Naive thymus-derived CD8-positive, alpha-beta T cell (primary cell): ENCODE measurements at regions of chr6 and their contacts with region 1.

Region 1: DNA sequence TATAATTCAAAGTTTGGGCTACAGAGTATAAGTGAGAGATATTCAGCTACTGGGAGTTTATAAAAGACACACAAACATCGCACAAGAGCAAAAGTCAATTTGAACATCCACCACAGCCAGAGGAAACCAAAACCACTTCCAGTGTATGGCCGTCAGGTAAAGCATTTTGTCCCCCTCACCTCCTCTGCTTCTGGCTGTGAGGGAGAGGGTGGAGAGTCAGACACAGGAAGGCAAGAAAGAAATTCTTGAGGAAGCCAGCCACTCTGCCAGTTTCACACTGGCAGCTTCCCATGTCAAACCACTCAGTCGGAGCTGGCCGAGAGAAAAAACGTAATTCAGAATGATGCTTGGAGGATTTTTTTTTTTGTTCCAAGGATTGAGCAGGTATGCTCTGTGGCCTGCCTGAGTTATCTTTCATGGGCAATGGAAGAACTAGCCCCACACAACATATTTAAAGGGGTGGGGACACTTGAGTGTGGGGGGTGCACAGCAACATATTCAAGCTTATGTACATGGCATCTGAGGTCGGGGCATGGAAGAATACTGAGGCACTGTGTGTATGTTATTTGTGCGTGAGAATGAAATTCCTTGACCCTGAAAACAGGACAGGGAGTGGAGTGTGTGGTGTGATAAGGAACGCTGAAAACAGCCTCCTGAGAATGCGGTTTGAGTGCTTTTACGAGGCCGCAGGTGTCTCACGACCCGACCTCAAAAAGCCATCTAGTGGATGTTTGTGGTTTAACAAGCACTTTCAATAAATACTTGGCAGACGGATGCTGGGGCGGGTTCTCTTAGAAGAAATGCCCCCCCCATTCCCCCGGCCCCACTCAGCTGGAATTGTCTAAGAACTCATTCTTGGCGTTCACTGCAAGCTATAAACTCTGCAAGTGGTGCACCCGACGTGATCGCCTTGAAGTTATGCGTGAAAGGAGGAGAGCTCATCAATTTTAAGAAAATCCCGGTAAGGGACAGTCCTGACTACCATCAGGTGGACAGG is 27.5 kb upstream of the ZBTB22 start:
- DNase-seq: peak; percentile 46 to 88 (median 74)
- ATAC-seq: peak; percentile 56 to 64
- H3K4me3 Mint-ChIP-seq: peak overlapping the region; percentile 73 to 91 (median 84)
- H3K27ac Mint-ChIP-seq: peak overlapping the region; percentile 91 to 99 (median 96)
- H3K4me1 Mint-ChIP-seq: peaks cover 28 to 54% (median 48%) of the 10 kb centered on the region in 4 donors
- H3K27me3 Mint-ChIP-seq: no peaks in the 10 kb centered on the region

Region 2: DNA sequence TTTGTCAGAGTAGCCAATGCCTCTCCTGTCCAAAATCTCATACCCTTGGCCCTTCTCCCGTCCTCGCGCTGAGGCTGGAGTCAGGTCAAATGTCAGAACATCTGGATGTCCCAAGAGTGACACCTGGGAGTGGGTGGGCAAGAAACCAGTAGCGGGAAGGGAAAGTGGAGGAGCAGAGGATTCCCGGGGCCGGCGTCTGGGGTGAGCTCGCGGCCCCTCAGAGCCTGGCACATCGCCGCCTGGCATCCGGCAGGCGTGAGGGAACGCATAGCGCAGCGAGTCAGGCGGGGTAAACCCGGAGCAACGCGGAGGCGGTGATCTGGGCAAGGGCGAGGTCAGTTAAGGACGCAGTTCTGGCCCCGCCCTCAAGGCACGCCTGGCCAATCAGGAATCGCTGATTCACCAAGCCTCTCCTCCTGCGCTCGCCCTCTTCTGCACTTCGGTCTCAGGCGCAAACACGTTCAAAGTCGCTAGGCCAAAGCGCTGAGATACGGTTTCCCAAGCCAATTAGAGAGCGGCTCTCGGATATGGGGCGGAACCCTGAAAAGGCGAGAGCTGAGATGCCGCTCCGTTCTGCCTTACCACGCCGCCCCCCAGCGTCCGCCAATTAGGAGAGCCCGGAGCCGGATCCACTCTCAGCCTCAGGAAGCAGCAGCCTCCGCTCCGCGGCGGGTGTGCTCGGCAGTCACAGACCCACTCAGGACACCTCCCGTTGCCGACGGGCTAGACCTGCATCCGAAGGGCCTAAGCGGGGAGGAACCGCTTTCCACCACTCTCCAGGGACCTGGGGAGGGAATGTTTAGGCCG is 95.9 kb before region 1 on chr6:
- POLR2A ChIA-PET with region 1: interaction called, 28 read pairs
- DNase-seq: peak; percentile 87 to 98 (median 95)
- ATAC-seq: peak; percentile 86 to 89
- H3K4me3 Mint-ChIP-seq: peak overlapping the region; percentile 83 to 94 (median 90)
- H3K27ac Mint-ChIP-seq: peak overlapping the region; percentile 91 to 99 (median 98)
- H3K4me1 Mint-ChIP-seq: peaks cover 22 to 41% (median 38%) of the 10 kb centered on the region in 4 donors
- H3K27me3 Mint-ChIP-seq: no peaks in the 10 kb centered on the region

Region 3: DNA sequence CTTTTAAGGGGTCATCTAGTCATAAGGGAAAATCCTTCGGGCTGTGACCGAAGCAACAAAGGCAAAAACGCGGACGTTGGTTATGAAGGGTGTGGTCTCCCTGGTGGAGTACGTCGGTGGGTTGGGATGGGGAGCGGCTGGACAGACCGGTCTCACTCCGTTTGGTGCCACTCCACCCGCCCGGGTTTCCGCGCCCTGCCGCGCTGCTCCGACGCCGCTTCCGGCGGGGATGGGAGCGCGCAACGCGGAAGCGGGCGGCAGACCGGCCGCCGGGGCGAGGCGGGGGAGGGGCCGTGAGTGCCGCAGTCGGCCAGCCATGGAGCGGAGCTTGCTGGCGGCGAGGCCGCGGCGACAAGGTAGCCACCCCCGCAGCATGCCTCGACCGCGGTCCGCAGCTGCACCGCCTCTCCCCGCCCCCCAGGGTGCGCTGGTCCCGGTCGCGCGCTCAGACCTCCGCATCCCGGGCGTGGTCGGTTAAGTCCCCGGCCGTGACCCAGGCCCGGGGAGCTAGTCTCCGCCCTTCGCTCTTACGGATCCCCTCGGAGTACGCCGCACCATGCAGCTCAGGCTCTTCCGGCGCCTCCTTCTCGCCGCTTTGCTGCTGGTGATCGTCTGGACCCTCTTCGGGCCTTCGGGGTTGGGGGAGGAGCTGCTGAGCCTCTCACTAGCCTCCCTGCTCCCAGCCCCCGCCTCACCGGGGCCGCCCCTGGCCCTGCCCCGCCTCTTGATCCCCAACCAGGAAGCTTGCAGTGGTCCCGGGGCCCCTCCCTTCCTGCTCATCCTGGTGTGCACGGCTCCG is 67.9 kb before region 1 on chr6 and contains the start of gene B3GALT4:
- POLR2A ChIA-PET with region 1: interaction called, 71 read pairs
- DNase-seq: peak; percentile 37 to 78 (median 64)
- ATAC-seq: peak; percentile 72 to 76
- H3K4me3 Mint-ChIP-seq: peak within 1 kb of the TSS; percentile 88 to 96 (median 92)
- H3K27ac Mint-ChIP-seq: peak within 1 kb of the TSS; percentile 72 to 97 (median 94)
- H3K4me1 Mint-ChIP-seq: peaks cover 34 to 80% (median 77%) of the 10 kb centered on the region in 4 donors
- H3K27me3 Mint-ChIP-seq: no peaks in the 10 kb centered on the region
- polyA plus RNA-seq, gene B3GALT4: 14.5 to 20.4 (median 18.7) TPM

Region 4: DNA sequence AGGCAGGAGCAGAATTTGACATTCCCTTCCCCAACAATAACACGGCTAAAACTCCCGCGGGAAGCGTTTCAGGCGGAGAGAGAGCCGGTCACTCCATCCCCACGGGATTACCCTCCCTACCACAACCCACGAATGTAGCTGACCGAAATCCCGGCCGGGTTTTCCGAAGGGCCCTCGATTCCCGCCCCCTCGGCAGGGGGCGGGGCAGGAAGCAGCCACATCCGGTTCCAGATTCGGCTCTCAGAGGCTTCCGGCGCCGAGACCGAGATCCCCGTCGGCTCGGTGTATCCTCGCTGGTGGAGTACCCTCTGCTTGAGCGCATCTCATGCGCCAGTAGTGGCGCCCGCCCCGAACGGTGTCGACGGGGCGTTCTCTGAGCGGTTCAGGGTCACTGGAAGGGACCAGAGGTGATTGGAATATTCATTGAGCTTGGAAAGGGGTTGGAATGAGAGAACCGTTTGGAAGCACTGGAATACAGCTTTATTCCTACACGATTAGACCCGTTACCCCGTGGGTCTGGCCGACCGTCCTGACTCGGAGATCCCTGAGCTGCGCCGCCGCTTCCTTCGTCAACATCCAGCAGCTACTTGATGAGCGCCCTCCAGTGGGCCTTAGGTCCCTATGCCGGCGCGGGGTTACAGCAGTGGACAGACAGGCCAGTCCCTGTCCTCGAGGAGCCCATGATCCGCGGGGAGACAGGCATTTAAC is 45.6 kb before region 1 on chr6:
- POLR2A ChIA-PET with region 1: interaction called, 101 read pairs
- DNase-seq: peak; percentile 86 to 95 (median 92)
- ATAC-seq: peak; percentile 82 to 88
- H3K4me3 Mint-ChIP-seq: peak overlapping the region; percentile 94 to 100 (median 98)
- H3K27ac Mint-ChIP-seq: peak overlapping the region; percentile 94 to 100 (median 99)
- H3K4me1 Mint-ChIP-seq: peaks cover 20 to 49% (median 43%) of the 10 kb centered on the region in 4 donors
- H3K27me3 Mint-ChIP-seq: peaks cover 0 to 2% (median 0%) of the 10 kb centered on the region in 5 donors

Region 5: DNA sequence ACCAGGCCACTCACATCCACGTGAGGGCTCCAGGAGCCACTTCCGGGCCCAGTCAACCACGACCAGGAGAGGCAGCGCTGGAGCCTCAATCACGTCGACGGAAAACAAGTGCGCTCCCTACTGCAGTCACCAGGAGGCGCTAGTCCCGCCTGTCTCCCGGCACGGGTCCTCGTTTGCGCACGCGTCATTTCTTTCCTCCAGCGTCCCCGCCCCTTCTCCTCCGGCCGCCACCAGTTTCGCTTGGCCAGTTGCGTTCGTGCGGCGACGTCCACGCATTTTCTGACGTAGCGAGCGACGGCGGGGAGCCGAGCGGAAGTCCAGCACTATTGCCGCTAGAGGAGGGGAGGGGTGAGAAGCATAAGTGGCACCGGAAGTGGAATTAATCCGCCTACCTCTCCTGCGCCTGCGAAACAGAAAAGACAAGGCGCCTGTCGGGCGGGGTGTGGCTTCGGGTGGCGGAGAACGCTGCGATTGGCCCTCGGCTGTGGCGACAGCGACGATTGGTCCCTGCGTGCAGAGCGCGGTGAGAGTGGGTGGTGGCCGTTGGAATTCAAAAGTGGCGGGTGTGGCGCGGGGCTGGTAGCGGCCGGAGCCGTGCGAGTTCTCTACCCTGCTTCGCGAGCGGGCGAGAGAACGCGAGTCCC is 46.4 kb after region 1 on chr6 and contains the start of gene KIFC1:
- POLR2A ChIA-PET with region 1: interaction called, 18 read pairs
- DNase-seq: peak; percentile 95 to 100 (median 99)
- ATAC-seq: peak; percentile 92 to 97
- H3K4me3 Mint-ChIP-seq: peak within 1 kb of the TSS; percentile 72 to 90 (median 86)
- H3K27ac Mint-ChIP-seq: peak within 1 kb of the TSS; percentile 90 to 98 (median 98)
- H3K4me1 Mint-ChIP-seq: peaks cover 9 to 27% (median 23%) of the 10 kb centered on the region in 4 donors
- H3K27me3 Mint-ChIP-seq: no peaks in the 10 kb centered on the region
- polyA plus RNA-seq, gene KIFC1: 0.26 to 0.46 TPM in 2 of 3 donors, not detected in the other

Region 6: DNA sequence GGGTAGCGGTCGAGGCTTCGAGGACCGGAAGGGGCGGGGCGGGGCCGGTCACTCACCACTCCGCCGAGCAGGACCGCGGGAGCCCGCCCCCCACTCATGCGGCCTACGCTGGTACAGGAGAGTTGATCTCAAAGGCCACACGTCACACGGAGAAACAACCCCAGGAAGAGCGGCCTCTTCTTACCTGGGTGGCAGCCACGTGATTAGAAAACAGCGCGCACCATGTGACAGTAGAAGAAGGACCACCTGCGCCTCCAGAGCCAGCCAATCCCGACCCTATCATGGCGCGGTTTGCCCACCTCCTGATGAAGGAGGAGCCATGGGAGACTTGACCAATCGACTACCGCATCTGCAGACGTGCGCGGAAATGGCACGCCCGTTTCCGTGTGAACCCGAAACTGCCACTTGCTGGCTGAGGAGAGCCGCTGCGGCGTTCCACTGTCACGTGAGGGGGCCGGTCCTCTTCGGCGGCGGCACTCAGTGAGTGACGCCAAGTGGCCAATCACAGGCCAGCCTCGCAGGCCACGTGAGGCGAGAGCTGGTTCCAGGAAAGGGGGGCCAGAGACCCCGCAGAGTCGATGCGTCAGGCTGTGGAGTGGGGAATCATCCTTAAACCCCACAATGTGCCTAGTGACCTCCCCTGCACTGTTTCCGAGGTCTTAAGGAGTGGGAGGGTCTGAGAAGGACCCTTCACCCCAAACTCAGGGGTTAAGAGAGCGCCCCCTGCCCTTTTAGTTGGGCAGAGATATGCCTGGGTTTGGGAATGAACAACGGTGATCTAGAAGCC is 73.1 kb after region 1 on chr6 and contains the start of gene CUTA:
- POLR2A ChIA-PET with region 1: interaction called, 21 read pairs
- DNase-seq: peak; percentile 93 to 100 (median 99)
- ATAC-seq: peak; percentile 90
- H3K4me3 Mint-ChIP-seq: peak within 1 kb of the TSS; percentile 90 to 95 (median 92)
- H3K27ac Mint-ChIP-seq: peak within 1 kb of the TSS; percentile 98 to 100 (median 99)
- H3K4me1 Mint-ChIP-seq: peaks cover 49 to 94% (median 80%) of the 10 kb centered on the region in 4 donors
- H3K27me3 Mint-ChIP-seq: no peaks in the 10 kb centered on the region
- polyA plus RNA-seq, gene CUTA: 338 to 441 (median 385) TPM